Activated CD4-positive, alpha-beta T cell treated with anti-CD3 and anti-CD28 coated beads for 36 hours (primary cell): ENCODE measurements at regions of chr9 and their contacts with region 1.

Region 1: GRCh38 chr9:99104459-99105151 is at the start of gene TGFBR1:
- DNase-seq: peak; percentile 95
- ATAC-seq: peak; percentile 89
- H3K4me3 Mint-ChIP-seq: peak within 1 kb of the TSS; percentile 79
- H3K27ac Mint-ChIP-seq: peak within 1 kb of the TSS; percentile 83
- H3K4me1 Mint-ChIP-seq: peaks cover 49% of the 10 kb centered on the region
- H3K27me3 Mint-ChIP-seq: no peaks in the 10 kb centered on the region
- total RNA-seq, gene TGFBR1: 18.6 to 19.3 TPM

Region 2: DNA sequence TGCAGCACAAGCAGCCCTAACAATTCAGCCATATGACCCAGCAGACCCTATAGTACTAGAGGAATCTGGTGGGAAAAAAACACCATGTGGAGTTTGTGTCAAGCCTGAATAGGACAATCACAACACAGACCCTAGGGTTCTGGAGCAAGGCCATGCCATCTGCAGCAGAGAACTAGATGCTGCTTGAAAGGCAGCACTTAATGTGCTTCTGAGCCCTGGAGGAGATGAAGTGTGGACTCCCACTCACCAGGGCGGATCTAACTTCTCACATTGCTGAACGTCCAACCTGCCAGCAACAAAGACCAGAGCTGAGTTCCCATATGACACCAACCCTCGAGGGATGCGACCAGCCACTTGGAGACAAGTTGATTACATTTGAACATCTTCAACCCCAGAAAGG is 439.1 kb before region 1 on chr9:
- CTCF ChIA-PET with region 1: no interaction called
- POLR2A ChIA-PET with region 1: no interaction called
- intact Hi-C with region 1: no loop called
- DNase-seq: no peak
- ATAC-seq: no peak
- H3K4me3 Mint-ChIP-seq: no peak overlapping the region
- H3K27ac Mint-ChIP-seq: no peak overlapping the region
- H3K4me1 Mint-ChIP-seq: no peaks in the 10 kb centered on the region
- H3K27me3 Mint-ChIP-seq: peaks cover 8% of the 10 kb centered on the region

Region 3: DNA sequence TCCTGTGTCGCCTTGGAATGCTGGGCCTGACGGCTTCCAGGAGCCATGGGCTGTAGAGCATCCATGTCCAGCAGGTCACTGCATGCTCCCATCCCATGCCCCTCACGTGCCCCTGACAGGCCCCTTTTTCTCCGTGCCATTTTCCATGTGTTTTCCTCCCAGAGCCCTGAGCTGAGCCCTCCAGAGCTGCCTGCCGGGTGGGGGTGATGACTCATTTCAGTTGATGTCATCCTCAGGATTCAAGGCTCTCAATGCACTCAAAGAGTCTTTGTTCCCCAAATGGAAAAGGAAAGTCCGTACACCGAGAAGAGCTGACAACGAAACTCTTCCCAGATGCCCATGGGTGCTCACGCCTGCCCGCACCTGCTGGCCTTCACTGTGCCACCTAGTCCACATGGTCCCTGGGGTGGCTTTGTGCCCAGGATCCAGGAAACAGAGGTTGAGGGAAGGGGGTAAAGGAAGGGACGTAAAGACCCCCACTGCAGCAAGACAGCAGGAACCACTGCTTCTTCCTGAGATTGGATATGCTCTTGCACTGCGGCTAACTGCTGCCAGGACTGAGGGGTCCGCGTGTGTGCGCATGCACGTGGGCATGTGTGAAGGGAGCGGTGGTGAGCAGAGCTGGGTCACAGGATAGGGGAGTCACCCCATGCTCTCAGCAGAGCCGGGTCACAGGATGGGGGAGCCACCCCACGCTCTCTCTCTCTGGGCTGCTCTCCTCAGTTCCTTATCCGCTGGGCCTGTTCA is 133.3 kb before region 1 on chr9:
- CTCF ChIA-PET with region 1: no interaction called
- POLR2A ChIA-PET with region 1: no interaction called
- intact Hi-C with region 1: no loop called
- DNase-seq: no peak
- ATAC-seq: no peak
- H3K4me3 Mint-ChIP-seq: no peak overlapping the region
- H3K27ac Mint-ChIP-seq: no peak overlapping the region
- H3K4me1 Mint-ChIP-seq: peaks cover 3% of the 10 kb centered on the region
- H3K27me3 Mint-ChIP-seq: peaks cover 10% of the 10 kb centered on the region

Region 4: DNA sequence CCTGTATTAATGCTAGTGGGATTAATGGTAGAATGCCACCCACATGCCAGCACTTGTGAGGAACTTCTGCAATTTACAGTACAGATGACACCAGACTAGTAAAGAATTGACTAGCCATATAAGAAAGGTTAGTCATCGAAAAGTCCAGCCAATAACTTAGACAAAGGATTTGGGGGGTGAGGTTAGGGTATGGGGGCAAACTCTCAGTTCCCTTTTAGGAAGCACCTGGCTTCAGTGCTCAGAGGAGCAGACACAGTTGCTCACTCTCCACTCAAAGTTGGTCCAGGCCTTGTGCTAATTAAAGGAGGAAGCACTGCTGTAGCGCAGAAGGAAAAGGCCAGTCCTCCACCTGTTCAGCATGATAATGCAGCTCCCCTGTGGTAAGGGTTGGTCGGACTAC is 25.5 kb after region 1 on chr9:
- CTCF ChIA-PET with region 1: interaction called, 6 read pairs
- POLR2A ChIA-PET with region 1: no interaction called
- intact Hi-C with region 1: loop called (anchors 2 kb)
- DNase-seq: no peak
- ATAC-seq: peak; percentile 30
- H3K4me3 Mint-ChIP-seq: no peak overlapping the region
- H3K27ac Mint-ChIP-seq: peak overlapping the region; percentile 29
- H3K4me1 Mint-ChIP-seq: peaks cover 78% of the 10 kb centered on the region
- H3K27me3 Mint-ChIP-seq: no peaks in the 10 kb centered on the region

Region 5: DNA sequence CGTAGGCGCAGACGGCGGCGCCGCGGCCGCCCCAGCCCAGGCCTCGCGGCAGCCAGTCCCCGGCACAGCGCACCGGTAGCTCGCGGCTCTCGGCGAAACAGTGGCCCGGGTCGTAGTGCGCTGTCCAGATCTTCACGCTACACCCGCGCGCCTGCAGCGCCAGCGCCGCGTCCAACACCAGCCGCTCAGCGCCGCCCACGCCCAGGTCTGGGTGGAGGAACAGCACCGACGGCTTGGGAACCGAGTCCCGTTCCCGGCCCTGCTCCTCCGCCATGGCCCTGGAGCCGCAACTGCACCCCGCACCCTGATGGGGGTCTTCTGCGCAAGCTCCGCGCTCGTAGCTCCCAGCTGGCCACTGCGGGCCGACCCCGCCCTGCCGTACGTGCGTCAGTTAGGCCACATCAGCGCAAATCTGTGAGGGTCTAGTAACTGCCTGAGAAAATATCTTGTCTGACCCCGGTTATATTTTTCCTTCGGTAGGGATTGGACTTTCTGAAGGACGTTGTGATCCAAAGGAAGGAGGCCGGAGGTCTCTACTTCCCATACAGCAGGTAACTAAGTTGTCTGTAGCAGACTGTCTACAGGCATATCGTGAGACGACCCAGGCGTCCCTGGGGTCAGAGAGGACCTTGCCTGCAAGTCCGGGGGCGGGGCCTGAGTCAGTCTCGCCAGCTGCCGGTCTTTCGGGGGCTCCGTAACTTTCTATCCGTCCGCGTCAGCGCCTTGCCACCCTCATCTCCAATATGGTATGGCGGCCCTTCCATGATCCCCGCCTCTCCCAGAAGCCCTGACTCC is 117.2 kb after region 1 on chr9 and contains the starts of genes ALG2 and SEC61B:
- CTCF ChIA-PET with region 1: no interaction called
- POLR2A ChIA-PET with region 1: no interaction called
- intact Hi-C with region 1: loop called (anchors 2 kb)
- DNase-seq: peak; percentile 97
- ATAC-seq: peak; percentile 94
- H3K4me3 Mint-ChIP-seq: peak within 1 kb of the TSS; percentile 99
- H3K27ac Mint-ChIP-seq: peak within 1 kb of the TSS; percentile 99
- H3K4me1 Mint-ChIP-seq: peaks cover 67% of the 10 kb centered on the region
- H3K27me3 Mint-ChIP-seq: no peaks in the 10 kb centered on the region
- total RNA-seq, gene ALG2: 22.8 to 31.1 TPM
- total RNA-seq, gene SEC61B: 81.0 to 139 TPM